ENCODE measurements at regions of chr7 and their contacts with region 1.

Region 1: GRCh38 chr7:105769901-105770628 is 106.3 kb downstream of the ATXN7L1 start:
- DNase-seq: no peak
- ATAC-seq: no peak
- H3K4me3 ChIP-seq: no peak overlapping the region
- H3K4me3 Mint-ChIP-seq: no peak overlapping the region
- H3K27ac ChIP-seq: no peak overlapping the region
- H3K27ac Mint-ChIP-seq: no peak overlapping the region
- H3K4me1 ChIP-seq: peaks cover 0 to 5% of the 10 kb centered on the region in 2 experiments
- H3K4me1 Mint-ChIP-seq: peaks cover 0 to 24% (median 15%) of the 10 kb centered on the region in 3 donors
- H3K27me3 ChIP-seq: no peaks in the 10 kb centered on the region
- H3K27me3 Mint-ChIP-seq: no peaks in the 10 kb centered on the region

Region 2: GRCh38 chr7:105664816-105665525 is 105.1 kb before region 1 on chr7:
- CTCF ChIA-PET with region 1: interaction called in 1 of 2 experiments, 11 read pairs
- POLR2A ChIA-PET with region 1: no interaction called
- DNase-seq: no peak
- ATAC-seq: no peak
- H3K4me3 ChIP-seq: no peak overlapping the region
- H3K4me3 Mint-ChIP-seq: no peak overlapping the region
- H3K27ac ChIP-seq: no peak overlapping the region
- H3K27ac Mint-ChIP-seq: peak overlapping the region in 1 of 2 donors; percentile 7
- H3K4me1 ChIP-seq: no peaks in the 10 kb centered on the region
- H3K4me1 Mint-ChIP-seq: peaks cover 8 to 17% (median 11%) of the 10 kb centered on the region in 3 donors
- H3K27me3 ChIP-seq: no peaks in the 10 kb centered on the region
- H3K27me3 Mint-ChIP-seq: no peaks in the 10 kb centered on the region

Region 3: GRCh38 chr7:105743351-105744090 is 26.5 kb before region 1 on chr7:
- CTCF ChIA-PET with region 1: no interaction called
- POLR2A ChIA-PET with region 1: no interaction called
- DNase-seq: no peak
- ATAC-seq: no peak
- H3K4me3 ChIP-seq: no peak overlapping the region
- H3K4me3 Mint-ChIP-seq: no peak overlapping the region
- H3K27ac ChIP-seq: no peak overlapping the region
- H3K27ac Mint-ChIP-seq: no peak overlapping the region
- H3K4me1 ChIP-seq: no peaks in the 10 kb centered on the region
- H3K4me1 Mint-ChIP-seq: peaks cover 14 to 31% (median 24%) of the 10 kb centered on the region in 3 donors
- H3K27me3 ChIP-seq: no peaks in the 10 kb centered on the region
- H3K27me3 Mint-ChIP-seq: no peaks in the 10 kb centered on the region

Region 4: GRCh38 chr7:105759670-105760550 is 10.2 kb before region 1 on chr7:
- CTCF ChIA-PET with region 1: interaction called, 4 to 12 read pairs
- POLR2A ChIA-PET with region 1: no interaction called
- DNase-seq: peak in 8 of 35 experiments; percentile 3 to 52 (median 10)
- ATAC-seq: peak; percentile 10 to 31 (median 21)
- H3K4me3 ChIP-seq: no peak overlapping the region
- H3K4me3 Mint-ChIP-seq: peak overlapping the region in 2 of 3 donors; percentile 31 to 43
- H3K27ac ChIP-seq: no peak overlapping the region
- H3K27ac Mint-ChIP-seq: peak overlapping the region; percentile 84 to 86
- H3K4me1 ChIP-seq: peaks cover 26 to 30% of the 10 kb centered on the region in 2 experiments
- H3K4me1 Mint-ChIP-seq: peaks cover 34 to 45% (median 43%) of the 10 kb centered on the region in 3 donors
- H3K27me3 ChIP-seq: no peaks in the 10 kb centered on the region
- H3K27me3 Mint-ChIP-seq: no peaks in the 10 kb centered on the region